ENCODE measurements at regions of chr10 and their contacts with region 1.

Region 1: GRCh38 chr10:5873515-5873995 is 16.1 kb downstream of the ANKRD16 start:
- DNase-seq: peak; percentile 71
- ATAC-seq: peak; percentile 86
- H3K4me3 Mint-ChIP-seq: no peak overlapping the region
- H3K27ac Mint-ChIP-seq: no peak overlapping the region
- H3K4me1 Mint-ChIP-seq: peaks cover 4% of the 10 kb centered on the region
- H3K27me3 Mint-ChIP-seq: no peaks in the 10 kb centered on the region

Region 2: GRCh38 chr10:5629303-5630111 is 244.0 kb before region 1 on chr10:
- CTCF ChIA-PET with region 1: interaction called, 17 read pairs
- DNase-seq: peak; percentile 91
- ATAC-seq: peak; percentile 74
- H3K4me3 Mint-ChIP-seq: peak overlapping the region; percentile 32
- H3K27ac Mint-ChIP-seq: peak overlapping the region; percentile 69
- H3K4me1 Mint-ChIP-seq: peaks cover 38% of the 10 kb centered on the region
- H3K27me3 Mint-ChIP-seq: peaks cover 25% of the 10 kb centered on the region

Region 3: GRCh38 chr10:5889624-5890451 is 16.3 kb after region 1 on chr10 and contains the starts of genes ANKRD16 and FBH1:
- CTCF ChIA-PET with region 1: interaction called, 10 read pairs
- DNase-seq: peak; percentile 97
- ATAC-seq: peak; percentile 88
- H3K4me3 Mint-ChIP-seq: peak within 1 kb of the TSS; percentile 76
- H3K27ac Mint-ChIP-seq: peak within 1 kb of the TSS; percentile 41
- H3K4me1 Mint-ChIP-seq: peaks cover 42% of the 10 kb centered on the region
- H3K27me3 Mint-ChIP-seq: no peaks in the 10 kb centered on the region
- total RNA-seq, gene ANKRD16: 4.6 to 4.7 TPM
- total RNA-seq, gene FBH1: 55.1 to 66.3 TPM

Region 4: GRCh38 chr10:5904227-5904626 is 30.7 kb after region 1 on chr10:
- CTCF ChIA-PET with region 1: no interaction called
- DNase-seq: no peak
- ATAC-seq: peak; percentile 66
- H3K4me3 Mint-ChIP-seq: no peak overlapping the region
- H3K27ac Mint-ChIP-seq: peak overlapping the region; percentile 68
- H3K4me1 Mint-ChIP-seq: peaks cover 21% of the 10 kb centered on the region
- H3K27me3 Mint-ChIP-seq: no peaks in the 10 kb centered on the region

Measured in activated CD8-positive, alpha-beta memory T cell treated with anti-CD3 and anti-CD28 coated beads, Interleukin-2, amount 10 ng/mL, durations not matched to agents 7 days and 5 days (primary cell).